GM10248 (cell line): ENCODE measurements at regions of chr17 and their contacts with region 1.

Region 1: DNA sequence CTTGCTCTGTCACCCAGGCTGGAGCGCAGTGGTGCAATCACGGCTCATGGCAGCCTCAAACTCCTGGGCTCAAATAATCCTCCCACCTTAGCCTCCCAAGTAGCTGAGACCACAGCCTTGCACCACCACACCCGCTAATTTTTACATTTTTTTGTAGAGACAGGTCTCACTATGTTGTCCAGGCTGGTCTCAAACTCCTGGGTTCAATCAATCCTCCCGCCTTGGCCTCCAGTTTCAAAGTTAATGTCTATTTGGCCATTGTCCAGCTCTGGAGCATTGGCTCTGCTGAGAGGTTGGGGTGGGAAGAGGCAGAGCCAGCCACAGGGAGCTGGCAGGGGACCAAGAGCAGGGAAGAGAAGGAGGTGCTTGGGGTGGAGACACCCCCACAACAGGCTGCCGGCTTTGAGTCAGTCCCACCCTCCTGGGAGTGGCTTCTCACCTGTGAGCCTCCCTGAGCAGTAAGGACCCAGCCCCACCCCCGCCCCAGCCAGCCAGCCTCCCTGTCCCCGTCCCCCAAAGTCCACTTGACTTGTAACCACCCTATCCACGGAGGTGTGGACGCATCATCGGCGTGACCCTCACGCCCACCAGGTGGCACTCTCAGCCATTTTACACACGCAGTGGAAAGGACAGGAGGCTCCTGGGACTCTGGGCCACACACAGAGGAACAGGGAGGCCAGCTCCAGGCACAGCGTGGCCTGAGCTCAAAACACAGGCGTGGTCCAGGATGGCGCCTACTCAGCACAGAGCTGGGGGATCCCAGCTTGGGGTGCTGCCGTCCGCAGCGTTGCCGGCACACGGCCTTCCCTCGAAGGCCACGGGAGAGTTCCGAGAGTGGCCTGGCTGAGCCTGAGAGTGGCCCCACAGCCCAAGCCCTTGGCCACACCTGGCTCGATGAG is 22.8 kb upstream of the PVALEF start:
- DNase-seq: peak; percentile 83
- CTCF ChIP-seq: peak; percentile 76

Region 2: DNA sequence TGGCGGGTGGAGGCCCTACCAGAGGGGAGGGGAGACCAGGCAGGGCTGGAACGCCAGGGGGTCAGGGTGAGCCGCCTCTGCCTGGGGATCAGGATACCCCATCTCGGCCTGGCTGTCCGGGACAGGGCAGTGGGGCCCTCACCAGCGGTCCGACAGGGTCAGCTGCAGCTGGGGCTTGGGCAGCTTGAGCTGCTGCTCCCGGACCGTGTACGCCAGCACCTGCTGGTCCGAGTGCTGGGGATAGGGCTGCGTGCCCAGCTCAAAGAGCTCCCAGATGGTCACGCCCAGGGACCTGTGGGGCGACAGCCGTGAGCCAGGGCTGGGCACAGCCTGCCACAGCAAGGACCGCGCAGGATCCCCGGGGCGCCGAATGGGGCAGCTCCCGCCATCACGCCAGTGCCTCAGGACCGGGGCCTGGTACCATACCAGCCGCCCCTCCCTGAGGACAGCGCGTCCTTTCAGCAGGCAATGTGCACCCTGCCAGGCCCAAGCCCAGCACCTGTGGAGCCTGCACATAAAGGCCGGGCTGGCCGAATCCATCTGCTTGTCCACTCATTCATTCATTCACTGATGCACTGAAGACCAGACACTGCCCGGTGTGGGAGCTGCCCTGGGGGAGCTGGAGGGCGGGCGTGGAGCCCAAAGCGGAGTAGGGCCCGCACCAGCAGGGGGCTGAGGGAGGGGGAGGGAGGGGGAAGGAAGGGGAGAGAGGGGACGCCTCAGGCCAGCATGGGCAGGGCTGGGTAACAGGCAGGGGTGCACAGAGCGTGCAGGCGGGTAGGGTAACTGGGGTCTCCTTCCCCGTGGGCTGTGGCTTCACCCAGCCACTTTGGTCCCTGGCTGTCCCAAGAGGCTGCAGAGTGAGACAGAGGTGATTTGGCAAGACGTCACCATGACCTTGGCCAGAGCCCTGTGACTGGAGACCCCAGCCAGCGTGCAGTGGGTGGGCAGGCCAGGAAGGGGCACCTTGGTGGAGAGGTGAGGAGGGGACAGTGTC is 19.2 kb before region 1 on chr17:
- CTCF ChIA-PET with region 1: no interaction called
- POLR2A ChIA-PET with region 1: no interaction called
- DNase-seq: no peak
- CTCF ChIP-seq: no peak

Region 3: GRCh38 chr17:81153340-81153803 is 10.8 kb after region 1 on chr17:
- CTCF ChIA-PET with region 1: interaction called, 15 read pairs
- POLR2A ChIA-PET with region 1: no interaction called
- DNase-seq: no peak
- CTCF ChIP-seq: no peak

Region 4: DNA sequence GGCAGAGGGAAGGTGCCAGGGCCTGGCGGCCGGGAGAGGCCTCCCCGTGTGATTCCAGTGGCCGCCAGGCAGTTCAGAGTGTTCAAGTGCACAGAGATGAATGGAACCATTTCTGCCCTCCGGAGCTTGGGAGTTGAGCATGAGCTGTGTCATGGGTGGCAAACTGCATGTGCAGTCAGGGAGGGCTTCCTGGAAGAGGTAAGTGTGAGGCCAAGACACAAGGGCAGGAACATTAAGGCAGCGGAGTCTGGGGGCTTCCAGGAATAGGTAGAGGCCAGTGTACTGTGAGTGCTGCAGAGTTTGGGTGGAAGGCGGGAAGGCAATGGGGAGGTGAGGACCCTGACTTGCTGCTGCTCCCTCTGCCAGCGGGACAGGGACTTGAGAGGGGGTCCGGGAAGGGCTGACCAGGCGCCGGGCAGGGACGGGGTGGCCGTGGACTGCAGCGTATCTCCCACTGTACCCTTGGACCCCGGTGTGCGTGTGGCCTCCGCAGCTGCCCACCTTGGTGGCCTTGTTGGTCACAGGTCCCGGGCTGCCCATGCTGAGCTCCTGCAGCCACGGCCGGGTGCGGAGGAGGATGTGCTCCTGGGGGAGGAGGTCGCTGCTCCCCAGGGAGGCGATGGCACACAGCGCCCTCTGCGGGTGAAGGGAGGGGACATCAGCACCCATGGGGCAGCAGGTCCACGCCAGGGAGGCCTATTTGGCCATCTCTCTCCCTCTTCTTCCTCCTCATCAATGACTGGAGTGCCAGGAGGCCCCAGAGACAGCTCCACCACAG is 87.7 kb after region 1 on chr17:
- CTCF ChIA-PET with region 1: interaction called, 14 read pairs
- POLR2A ChIA-PET with region 1: no interaction called
- DNase-seq: no peak
- CTCF ChIP-seq: peak; percentile 34

Region 5: GRCh38 chr17:81238817-81239600 is 96.5 kb after region 1 on chr17 and contains the starts of genes NDUFAF8 and TEPSIN:
- CTCF ChIA-PET with region 1: interaction called, 39 read pairs
- POLR2A ChIA-PET with region 1: no interaction called
- DNase-seq: peak; percentile 100
- CTCF ChIP-seq: no peak

Region 6: GRCh38 chr17:81484195-81484979 is 341.8 kb after region 1 on chr17:
- CTCF ChIA-PET with region 1: interaction called, 22 read pairs
- POLR2A ChIA-PET with region 1: no interaction called
- DNase-seq: peak; percentile 89
- CTCF ChIP-seq: peak; percentile 96